ENCODE measurements at regions of chr10 and their contacts with region 1.

Region 1: GRCh38 chr10:124626759-124627380 is 117.3 kb downstream of the FAM53B start:
- DNase-seq: peak; percentile 38
- ATAC-seq: peak; percentile 80
- H3K4me3 ChIP-seq: no peak overlapping the region
- H3K27ac ChIP-seq: no peak overlapping the region; the same call in 1 of the 2 replicates
- H3K4me1 ChIP-seq: peaks cover 25% of the 10 kb centered on the region
- H3K27me3 ChIP-seq: no peaks in the 10 kb centered on the region
- CTCF ChIP-seq: peak in 2 of 3 experiments; percentile 24 to 30; a peak in 4 of 6 replicates
- EP300 ChIP-seq: 0 out of 4 replicates have a peak, but pooled peaks of 1 of the 2 experiments have one; percentile 13
- POLR2A ChIP-seq: no peak
- RAD21 ChIP-seq: peak; percentile 21; the same call in 1 of the 2 replicates

Region 2: GRCh38 chr10:124647421-124648130 is 20.7 kb after region 1 on chr10:
- CTCF ChIA-PET with region 1: no interaction called
- POLR2A ChIA-PET with region 1: interaction called, 3 read pairs
- RAD21 ChIA-PET with region 1: interaction called, 10 read pairs
- SMC1A ChIA-PET with region 1: interaction called, 3 read pairs
- in situ Hi-C with region 1: no loop called
- intact Hi-C with region 1: no loop called
- DNase-seq: peak; percentile 50
- ATAC-seq: peak; percentile 79
- H3K4me3 ChIP-seq: no peak overlapping the region
- H3K27ac ChIP-seq: peak overlapping the region; percentile 87
- H3K4me1 ChIP-seq: peaks cover 49% of the 10 kb centered on the region
- H3K27me3 ChIP-seq: no peaks in the 10 kb centered on the region
- CTCF ChIP-seq: peak; percentile 37 to 41 (median 40); a peak in 5 of 6 replicates
- EP300 ChIP-seq: no peak; a peak in 1 of 4 replicates
- POLR2A ChIP-seq: no peak
- RAD21 ChIP-seq: peak; percentile 43

Measured in GM12878 (cell line).